Panc1 (cell line): ENCODE measurements at regions of chr20 and their contacts with region 1.

Region 1: DNA sequence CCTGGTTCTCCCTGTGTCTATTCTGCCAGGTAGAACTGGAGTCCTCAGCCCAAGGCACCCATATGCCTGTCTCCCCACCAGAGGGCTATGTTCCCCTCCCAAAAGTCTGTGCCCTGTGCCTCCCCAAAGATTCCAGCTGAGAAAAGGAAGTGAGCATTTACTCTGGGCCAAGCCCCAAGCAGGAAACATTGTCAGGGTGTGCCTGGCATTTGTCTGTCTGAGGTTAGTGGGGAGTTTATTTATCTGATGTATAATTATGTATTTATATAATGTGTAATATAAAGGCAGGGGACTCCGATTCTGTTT is 5.6 kb downstream of the GDF5 start:
- DNase-seq: no peak
- ATAC-seq: no peak
- H3K4me3 ChIP-seq: no peak overlapping the region
- H3K27ac ChIP-seq: no peak overlapping the region
- H3K4me1 ChIP-seq: no peaks in the 10 kb centered on the region
- H3K27me3 ChIP-seq: no peaks in the 10 kb centered on the region
- CTCF ChIP-seq: no peak

Region 2: GRCh38 chr20:35342154-35342769 is 90.1 kb before region 1 on chr20:
- CTCF ChIA-PET with region 1: no interaction called
- POLR2A ChIA-PET with region 1: interaction called, 10 read pairs
- in situ Hi-C with region 1: no loop called
- intact Hi-C with region 1: no loop called
- DNase-seq: no peak
- ATAC-seq: no peak
- H3K4me3 ChIP-seq: no peak overlapping the region
- H3K27ac ChIP-seq: peak overlapping the region; percentile 14; the same call in 1 of the 2 replicates
- H3K4me1 ChIP-seq: peaks cover 6% of the 10 kb centered on the region; the same call in 1 of the 2 replicates
- H3K27me3 ChIP-seq: no peaks in the 10 kb centered on the region
- CTCF ChIP-seq: peak; percentile 38

Region 3: DNA sequence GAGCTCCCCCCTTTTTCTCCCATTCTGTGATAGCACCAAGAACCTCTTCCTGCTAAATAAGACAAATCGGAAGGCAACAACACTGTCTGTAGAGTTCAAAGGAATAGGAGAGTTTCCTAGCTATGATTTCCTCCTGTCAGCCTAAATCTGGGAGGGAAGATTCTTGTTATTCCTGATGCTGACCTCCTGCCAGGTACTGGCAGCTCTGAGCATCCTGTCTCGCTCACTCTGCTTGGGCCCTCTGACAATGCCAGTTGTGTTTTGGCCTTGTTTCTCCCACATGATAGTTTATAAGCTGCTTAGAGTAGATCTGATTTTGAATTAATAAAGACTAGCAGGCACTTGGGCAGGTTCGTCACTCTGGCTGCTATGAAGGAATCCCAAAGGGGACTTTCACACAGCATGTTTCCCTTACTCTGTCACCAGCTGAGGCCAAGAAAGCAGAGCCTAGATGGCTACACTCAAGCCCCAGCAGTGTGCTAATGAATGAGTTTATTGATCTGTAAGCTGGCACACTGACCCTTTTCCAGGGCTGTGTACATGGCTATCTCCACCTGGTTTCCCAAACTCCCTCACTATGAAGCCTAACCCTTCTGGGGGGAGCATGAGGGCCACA is 72.9 kb before region 1 on chr20:
- CTCF ChIA-PET with region 1: no interaction called
- POLR2A ChIA-PET with region 1: interaction called, 10 read pairs
- in situ Hi-C with region 1: no loop called
- intact Hi-C with region 1: no loop called
- DNase-seq: no peak
- ATAC-seq: peak; percentile 69
- H3K4me3 ChIP-seq: no peak overlapping the region
- H3K27ac ChIP-seq: no peak overlapping the region
- H3K4me1 ChIP-seq: no peaks in the 10 kb centered on the region; the same call in 1 of the 2 replicates
- H3K27me3 ChIP-seq: no peaks in the 10 kb centered on the region
- CTCF ChIP-seq: no peak